ENCODE measurements at regions of chr4 and their contacts with region 1.

Region 1: DNA sequence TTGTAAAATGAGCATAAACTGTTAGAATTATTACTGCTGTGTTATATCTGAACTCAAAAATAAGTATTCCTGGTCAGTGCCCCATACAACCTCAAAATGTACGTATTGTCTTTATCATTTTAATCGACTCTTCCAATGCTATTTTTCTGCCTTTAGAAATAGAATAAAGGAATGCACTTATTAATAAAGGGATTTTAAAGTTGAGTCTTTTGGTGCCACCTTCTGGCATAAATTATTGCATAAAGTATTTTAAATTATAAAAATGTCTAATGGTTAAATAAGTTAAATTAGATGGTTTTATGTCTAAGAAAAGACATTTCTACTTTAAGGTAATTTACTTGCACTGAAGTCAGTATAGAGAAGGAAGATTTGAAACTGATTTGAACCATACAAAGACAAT is 424.0 kb upstream of the NDST4 start:
- DNase-seq: no peak
- ATAC-seq: no peak
- H3K4me3 ChIP-seq: no peak overlapping the region
- H3K27ac ChIP-seq: no peak overlapping the region
- H3K4me1 ChIP-seq: no peaks in the 10 kb centered on the region
- H3K27me3 ChIP-seq: no peaks in the 10 kb centered on the region
- CTCF ChIP-seq: no peak; the same call in 1 of the 2 replicates

Region 2: DNA sequence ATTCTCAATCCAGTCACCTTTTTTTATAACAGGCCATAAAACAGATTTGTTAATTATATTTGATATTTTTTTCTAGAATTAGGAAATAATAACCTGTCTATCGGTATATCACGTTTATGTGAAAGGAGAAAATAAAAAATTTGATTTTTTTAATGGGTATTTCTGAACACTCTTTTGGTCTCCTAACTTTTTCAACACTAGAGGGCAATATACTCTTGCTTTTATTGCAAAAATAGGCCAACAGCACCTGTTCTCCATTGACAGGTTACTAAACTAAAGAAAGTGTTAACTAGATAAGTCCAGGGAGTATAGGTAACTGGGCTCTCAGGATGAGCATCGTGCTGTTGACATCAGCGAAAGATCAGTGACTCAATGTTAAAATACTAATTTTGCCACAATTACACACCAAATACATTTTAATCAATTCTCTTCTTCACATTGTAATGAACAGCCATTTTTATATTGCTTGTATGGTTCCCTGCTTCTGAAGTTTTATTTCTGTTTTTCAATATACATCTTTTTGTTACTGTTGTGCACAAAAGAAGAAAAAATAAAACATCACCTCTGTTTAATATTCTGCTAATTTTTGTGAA is 446.8 kb before region 1 on chr4:
- CTCF ChIA-PET with region 1: no interaction called
- POLR2A ChIA-PET with region 1: no interaction called
- in situ Hi-C with region 1: no loop called
- intact Hi-C with region 1: loop called (anchors 5 kb)
- DNase-seq: no peak
- ATAC-seq: no peak
- H3K4me3 ChIP-seq: no peak overlapping the region
- H3K27ac ChIP-seq: no peak overlapping the region
- H3K4me1 ChIP-seq: no peaks in the 10 kb centered on the region
- H3K27me3 ChIP-seq: no peaks in the 10 kb centered on the region
- CTCF ChIP-seq: peak; percentile 51; the same call in 1 of the 2 replicates

Region 3: DNA sequence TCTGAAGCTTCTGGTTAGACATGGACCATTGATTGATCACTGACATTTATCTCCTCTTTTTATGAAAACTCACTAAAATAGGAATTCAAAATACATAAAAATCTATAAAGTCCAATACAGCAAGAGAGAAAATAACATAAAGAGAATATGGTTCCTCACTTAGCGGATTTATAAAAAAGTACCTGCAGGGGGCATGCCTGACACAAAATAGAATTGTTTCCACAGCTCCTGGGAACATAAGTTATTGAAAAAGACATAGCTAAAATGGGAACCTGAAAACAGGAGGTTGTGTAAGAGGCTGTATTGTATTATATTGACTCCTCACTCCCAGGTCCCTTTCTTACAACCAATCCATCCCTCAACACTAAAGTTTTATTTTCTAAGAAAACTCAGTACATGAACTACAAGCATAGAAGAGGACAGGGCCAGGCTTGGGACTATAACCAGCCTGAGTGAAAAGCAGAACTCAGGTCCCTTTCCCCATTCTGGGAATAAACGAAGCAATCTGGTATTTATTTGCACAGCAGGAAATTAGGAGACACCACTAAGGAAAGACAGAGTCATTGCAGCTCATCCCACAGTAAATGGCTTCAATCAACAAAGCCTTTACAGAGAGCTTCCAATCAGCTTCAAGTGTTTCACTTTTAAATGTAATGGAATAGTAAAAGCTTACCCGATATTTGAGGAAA is 302.8 kb before region 1 on chr4:
- CTCF ChIA-PET with region 1: no interaction called
- POLR2A ChIA-PET with region 1: no interaction called
- in situ Hi-C with region 1: no loop called
- intact Hi-C with region 1: loop called (anchors 10 kb)
- DNase-seq: no peak
- ATAC-seq: no peak
- H3K4me3 ChIP-seq: no peak overlapping the region
- H3K27ac ChIP-seq: no peak overlapping the region
- H3K4me1 ChIP-seq: no peaks in the 10 kb centered on the region
- H3K27me3 ChIP-seq: no peaks in the 10 kb centered on the region
- CTCF ChIP-seq: no peak; the same call in 1 of the 2 replicates

Region 4: GRCh38 chr4:115729739-115730266 is 192.4 kb after region 1 on chr4:
- CTCF ChIA-PET with region 1: no interaction called
- POLR2A ChIA-PET with region 1: no interaction called
- in situ Hi-C with region 1: no loop called
- intact Hi-C with region 1: no loop called
- DNase-seq: no peak
- ATAC-seq: no peak
- H3K4me3 ChIP-seq: no peak overlapping the region
- H3K27ac ChIP-seq: no peak overlapping the region
- H3K4me1 ChIP-seq: no peaks in the 10 kb centered on the region
- H3K27me3 ChIP-seq: no peaks in the 10 kb centered on the region
- CTCF ChIP-seq: no peak